Activated CD4-positive, alpha-beta memory T cell treated with anti-CD3 and anti-CD28 coated beads, Interleukin-2, amount 10 ng/mL, durations not matched to agents 7 days and 5 days (primary cell): ENCODE measurements at regions of chr18 and their contacts with region 1.

Region 1: DNA sequence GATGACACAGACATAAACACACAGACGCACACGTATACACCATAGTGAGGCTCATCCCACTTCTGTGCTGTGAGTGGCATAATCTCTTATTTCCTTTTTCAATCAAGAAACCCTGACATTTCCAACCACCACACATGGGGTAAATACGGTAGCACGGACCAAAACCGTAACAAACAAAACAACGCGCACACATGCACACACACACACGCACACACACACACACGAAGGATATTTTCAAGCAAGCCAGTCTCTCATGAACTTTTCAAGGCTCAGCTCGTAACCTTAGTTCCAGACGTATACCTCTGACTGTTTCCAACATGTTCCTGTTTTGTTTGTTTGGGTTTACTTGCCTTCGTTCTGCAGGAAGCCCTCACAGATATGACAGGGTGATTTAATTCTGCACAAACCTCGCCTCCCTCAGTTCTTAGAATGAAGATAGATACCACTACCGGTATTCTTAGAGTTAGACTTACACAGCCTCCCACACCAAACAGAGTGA is 119.8 kb downstream of the BCL2 start:
- DNase-seq: peak; percentile 59
- H3K4me3 Mint-ChIP-seq: no peak overlapping the region
- H3K27ac Mint-ChIP-seq: no peak overlapping the region
- H3K4me1 Mint-ChIP-seq: peaks cover 48% of the 10 kb centered on the region
- H3K27me3 Mint-ChIP-seq: no peaks in the 10 kb centered on the region

Region 2: DNA sequence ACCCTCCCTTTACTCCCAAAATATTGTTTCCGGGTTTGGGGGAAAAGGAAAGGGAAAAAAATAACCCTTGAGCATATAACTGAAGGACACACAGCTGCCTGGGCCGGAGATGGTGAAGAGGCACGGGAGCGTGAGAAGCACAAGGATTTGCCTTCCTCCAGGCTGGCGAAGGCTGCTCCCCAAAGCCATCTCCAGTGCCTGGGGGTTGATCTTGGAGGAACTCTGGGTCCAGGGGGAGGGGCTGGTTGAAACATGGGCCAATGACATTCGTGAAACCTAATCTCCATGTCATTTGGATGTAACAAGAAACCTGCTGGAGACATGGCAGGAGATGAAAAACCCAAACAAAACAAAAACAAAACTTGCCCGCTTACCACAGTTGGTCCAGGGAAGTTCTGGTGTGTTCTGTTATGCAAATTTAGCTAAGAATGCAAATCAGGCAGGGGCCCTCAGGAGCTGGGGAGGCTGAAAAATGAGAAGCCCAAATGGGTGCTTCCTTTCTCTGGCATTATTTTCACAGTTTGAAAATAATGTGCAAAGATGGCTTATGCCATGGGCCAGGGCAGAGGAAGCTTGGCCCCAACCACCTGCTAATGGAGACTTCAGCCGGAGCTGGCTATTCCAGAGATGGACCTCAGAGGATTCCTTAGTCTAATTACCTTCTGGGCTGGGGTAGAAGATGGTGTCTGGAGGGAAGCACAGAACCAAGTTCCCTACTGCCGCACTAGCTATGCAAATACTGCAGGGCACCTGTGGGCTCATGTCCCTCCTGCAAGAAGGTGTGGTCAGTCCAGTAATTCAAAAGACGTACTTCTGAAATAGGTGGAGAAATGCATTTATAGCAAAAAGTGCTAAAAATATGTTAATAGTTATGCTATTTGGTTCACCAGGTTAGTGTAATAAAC is 61.1 kb before region 1 on chr18:
- CTCF ChIA-PET with region 1: no interaction called
- POLR2A ChIA-PET with region 1: interaction called, 10 read pairs
- DNase-seq: no peak
- H3K4me3 Mint-ChIP-seq: peak overlapping the region; percentile 72
- H3K27ac Mint-ChIP-seq: peak overlapping the region; percentile 86
- H3K4me1 Mint-ChIP-seq: peaks cover 68% of the 10 kb centered on the region
- H3K27me3 Mint-ChIP-seq: no peaks in the 10 kb centered on the region

Region 3: GRCh38 chr18:63216516-63217311 is 16.9 kb after region 1 on chr18:
- CTCF ChIA-PET with region 1: interaction called, 5 read pairs
- POLR2A ChIA-PET with region 1: interaction called, 57 read pairs
- DNase-seq: peak; percentile 49
- H3K4me3 Mint-ChIP-seq: peak overlapping the region; percentile 64
- H3K27ac Mint-ChIP-seq: peak overlapping the region; percentile 93
- H3K4me1 Mint-ChIP-seq: peaks cover 95% of the 10 kb centered on the region
- H3K27me3 Mint-ChIP-seq: no peaks in the 10 kb centered on the region